ENCODE measurements at regions of chr5 and their contacts with region 1.

Region 1: DNA sequence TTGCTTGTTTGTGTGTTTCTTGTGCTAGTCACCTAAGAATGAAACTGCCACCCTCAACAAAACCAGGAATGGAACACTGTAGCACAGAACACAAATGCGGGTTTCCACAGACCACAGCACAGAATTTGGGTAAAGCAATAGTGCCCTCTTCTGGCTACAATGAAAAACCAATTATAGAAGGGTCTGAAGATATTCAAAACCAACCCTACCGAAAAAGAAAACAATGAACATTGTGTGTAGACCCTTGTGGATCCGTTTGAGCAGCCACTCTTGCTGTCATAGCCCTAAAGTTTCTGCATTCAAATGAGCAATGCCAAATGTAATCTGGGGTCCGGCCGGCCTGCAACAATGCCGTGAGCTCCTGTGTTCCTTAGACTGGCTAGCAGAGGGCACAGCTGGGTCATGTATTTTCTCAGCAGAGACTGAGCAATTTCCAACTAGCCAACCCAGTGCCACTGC is 8.3 kb upstream of the ENC1 start:
- DNase-seq: no peak
- H3K4me3 ChIP-seq: no peak overlapping the region
- H3K27ac ChIP-seq: no peak overlapping the region
- H3K4me1 ChIP-seq: peaks cover 0 to 8% (median 0%) of the 10 kb centered on the region in 4 donors
- H3K27me3 ChIP-seq: no peaks in the 10 kb centered on the region
- CTCF ChIP-seq: peak; percentile 67 to 79 (median 73)
- EP300 ChIP-seq: no peak
- POLR2A ChIP-seq: no peak

Region 2: GRCh38 chr5:73892806-73893205 is 756.1 kb before region 1 on chr5:
- in situ Hi-C with region 1: loop called in 1 of 4 experiments (anchors 5 kb)
- intact Hi-C with region 1: no loop called
- DNase-seq: no peak
- H3K4me3 ChIP-seq: no peak overlapping the region
- H3K27ac ChIP-seq: no peak overlapping the region
- H3K4me1 ChIP-seq: no peaks in the 10 kb centered on the region
- H3K27me3 ChIP-seq: no peaks in the 10 kb centered on the region
- CTCF ChIP-seq: no peak
- EP300 ChIP-seq: no peak
- POLR2A ChIP-seq: no peak

Region 3: GRCh38 chr5:73902327-73903051 is 746.4 kb before region 1 on chr5:
- in situ Hi-C with region 1: loop called in 3 of 4 experiments (anchors 5 kb)
- intact Hi-C with region 1: loop called (anchors 2 kb)
- DNase-seq: no peak
- H3K4me3 ChIP-seq: no peak overlapping the region
- H3K27ac ChIP-seq: no peak overlapping the region
- H3K4me1 ChIP-seq: peaks cover 0 to 16% (median 3%) of the 10 kb centered on the region in 4 donors
- H3K27me3 ChIP-seq: no peaks in the 10 kb centered on the region
- CTCF ChIP-seq: peak; percentile 86 to 93 (median 90)
- EP300 ChIP-seq: no peak
- POLR2A ChIP-seq: no peak

Region 4: GRCh38 chr5:73908395-73908794 is 740.5 kb before region 1 on chr5:
- in situ Hi-C with region 1: loop called in 3 of 4 experiments (anchors 5 kb)
- intact Hi-C with region 1: loop called (anchors 2 kb)
- DNase-seq: no peak
- H3K4me3 ChIP-seq: no peak overlapping the region
- H3K27ac ChIP-seq: no peak overlapping the region
- H3K4me1 ChIP-seq: no peaks in the 10 kb centered on the region
- H3K27me3 ChIP-seq: no peaks in the 10 kb centered on the region
- CTCF ChIP-seq: no peak
- EP300 ChIP-seq: no peak
- POLR2A ChIP-seq: no peak

Region 5: GRCh38 chr5:75062925-75063531 is 414.2 kb after region 1 on chr5:
- in situ Hi-C with region 1: no loop called
- intact Hi-C with region 1: no loop called
- DNase-seq: no peak
- H3K4me3 ChIP-seq: no peak overlapping the region
- H3K27ac ChIP-seq: no peak overlapping the region
- H3K4me1 ChIP-seq: no peaks in the 10 kb centered on the region
- H3K27me3 ChIP-seq: no peaks in the 10 kb centered on the region
- CTCF ChIP-seq: no peak
- EP300 ChIP-seq: no peak
- POLR2A ChIP-seq: no peak